HepG2 (cell line): ENCODE measurements at regions of chr6 and their contacts with region 1.

Region 1: DNA sequence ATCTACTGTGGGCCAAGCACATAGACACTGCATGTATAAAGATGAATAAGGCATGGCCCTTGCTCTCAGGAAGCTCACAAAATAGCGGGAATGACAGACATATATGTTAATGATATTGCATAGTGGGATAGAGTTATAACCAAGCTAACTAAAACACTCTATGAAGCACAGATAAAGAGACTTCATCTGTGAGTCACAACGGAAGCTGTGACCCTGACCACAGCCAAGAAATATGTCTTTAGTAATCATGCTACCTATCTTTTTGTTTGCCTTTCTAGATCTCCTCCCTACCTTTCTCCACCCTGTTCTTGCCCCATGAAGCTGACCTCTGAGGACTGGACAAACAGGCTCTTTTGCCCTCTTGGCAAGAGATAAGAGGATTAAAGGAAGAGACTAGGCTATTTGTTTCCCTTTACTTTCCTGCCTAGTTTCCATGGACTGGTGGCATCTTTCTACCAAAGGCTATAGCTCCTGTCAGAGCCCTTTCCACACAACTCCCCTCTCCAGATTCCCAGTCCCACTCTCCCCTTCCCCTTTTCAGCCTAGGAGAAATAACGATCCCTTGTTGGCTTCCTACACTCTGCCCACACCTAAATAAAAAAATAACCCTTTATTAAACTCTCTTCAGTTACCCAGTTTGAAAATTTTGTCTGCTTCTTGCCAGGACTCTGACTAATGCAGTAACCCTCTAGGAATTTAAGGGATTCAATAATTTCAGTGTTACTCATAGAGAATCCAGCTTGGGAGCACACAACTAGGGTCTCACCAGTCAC is 504.9 kb upstream of the MARCKS start:
- DNase-seq: peak; percentile 100
- ATAC-seq: peak; percentile 94
- H3K4me3 ChIP-seq: peak overlapping the region in 1 of 3 experiments; percentile 20; a peak in 1 of 6 replicates
- H3K27ac ChIP-seq: peak overlapping the region; percentile 91
- H3K4me1 ChIP-seq: peaks cover 75% of the 10 kb centered on the region
- H3K27me3 ChIP-seq: no peaks in the 10 kb centered on the region; a peak in 1 of 5 replicates
- CTCF ChIP-seq: no peak
- EP300 ChIP-seq: peak; percentile 97 to 100
- POLR2A ChIP-seq: no peak
- RAD21 ChIP-seq: no peak

Region 2: DNA sequence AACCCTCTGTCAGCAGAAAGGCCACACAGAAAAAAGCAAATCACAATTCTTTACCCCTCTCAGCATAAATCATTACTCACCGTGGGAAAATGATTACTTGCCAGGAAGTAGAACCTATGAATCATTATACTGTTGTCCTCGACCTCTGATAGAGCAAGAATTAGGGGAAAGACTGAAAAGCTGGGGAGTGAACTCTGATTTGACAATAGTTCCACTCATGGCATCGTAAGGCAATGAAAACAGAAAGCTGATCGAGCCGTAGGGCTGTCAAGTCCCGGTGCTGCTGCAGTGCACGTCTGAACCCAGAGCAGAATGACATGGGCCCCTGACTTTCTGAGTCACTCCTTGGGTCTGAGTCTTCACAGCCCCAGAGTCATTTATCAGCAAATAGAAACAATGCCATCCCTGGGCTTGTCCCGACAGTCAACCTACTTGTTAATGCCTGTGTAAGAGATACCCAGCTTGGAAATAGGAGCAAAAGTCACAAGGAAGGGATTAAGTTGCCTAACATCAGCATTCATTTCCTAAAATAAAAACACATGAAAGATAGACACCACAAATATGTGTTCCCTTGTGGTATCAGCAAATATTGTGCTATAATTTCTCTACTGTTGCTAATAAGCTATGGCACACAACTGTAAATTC is 280.1 kb after region 1 on chr6:
- CTCF ChIA-PET with region 1: no interaction called
- POLR2A ChIA-PET with region 1: interaction called, 8 read pairs
- in situ Hi-C with region 1: loop called (anchors 10 kb)
- intact Hi-C with region 1: no loop called
- DNase-seq: peak; percentile 78
- ATAC-seq: peak; percentile 92
- H3K4me3 ChIP-seq: peak overlapping the region in 2 of 3 experiments; percentile 9 to 29; a peak in 2 of 6 replicates
- H3K27ac ChIP-seq: peak overlapping the region; percentile 61
- H3K4me1 ChIP-seq: peaks cover 69% of the 10 kb centered on the region
- H3K27me3 ChIP-seq: no peaks in the 10 kb centered on the region
- CTCF ChIP-seq: no peak
- EP300 ChIP-seq: peak in 1 of 2 experiments; percentile 60; a peak in 1 of 4 replicates
- POLR2A ChIP-seq: peak in 1 of 2 experiments; percentile 38; a peak in 1 of 4 replicates
- RAD21 ChIP-seq: no peak